PC-3 (cell line): ENCODE measurements at regions of chr15 and their contacts with region 1.

Region 1: GRCh38 chr15:35089551-35089950 is 4.5 kb upstream of the NANOGP8 start:
- DNase-seq: no peak
- ATAC-seq: no peak
- H3K4me3 ChIP-seq: no peak overlapping the region
- H3K27ac ChIP-seq: no peak overlapping the region
- H3K4me1 ChIP-seq: no peaks in the 10 kb centered on the region
- H3K27me3 ChIP-seq: no peaks in the 10 kb centered on the region
- CTCF ChIP-seq: no peak

Region 2: GRCh38 chr15:35019386-35020083 is 70.0 kb before region 1 on chr15:
- CTCF ChIA-PET with region 1: interaction called, 13 read pairs
- POLR2A ChIA-PET with region 1: no interaction called
- intact Hi-C with region 1: no loop called
- DNase-seq: peak; percentile 55
- ATAC-seq: peak; percentile 78
- H3K4me3 ChIP-seq: peak overlapping the region; percentile 62
- H3K27ac ChIP-seq: no peak overlapping the region
- H3K4me1 ChIP-seq: peaks cover 10% of the 10 kb centered on the region; the same call in 1 of the 2 replicates
- H3K27me3 ChIP-seq: no peaks in the 10 kb centered on the region
- CTCF ChIP-seq: no peak